CD14-positive monocyte (primary cell): ENCODE measurements at regions of chr4 and their contacts with region 1.

Region 1: GRCh38 chr4:83252782-83253405 is 31.7 kb downstream of the COQ2 start:
- DNase-seq: peak; percentile 56 to 74 (median 67)
- H3K4me3 ChIP-seq: peak overlapping the region in 1 of 3 experiments; percentile 2
- H3K4me3 Mint-ChIP-seq: no peak overlapping the region
- H3K27ac ChIP-seq: peak overlapping the region in 1 of 2 donors; percentile 72
- H3K27ac Mint-ChIP-seq: peak overlapping the region in 2 of 7 donors; percentile 78 to 79
- H3K4me1 ChIP-seq: peaks cover 42 to 46% of the 10 kb centered on the region in 2 donors
- H3K4me1 Mint-ChIP-seq: peaks cover 53% of the 10 kb centered on the region
- H3K27me3 ChIP-seq: no peaks in the 10 kb centered on the region
- H3K27me3 Mint-ChIP-seq: no peaks in the 10 kb centered on the region
- CTCF ChIP-seq: peak; percentile 78

Region 2: GRCh38 chr4:83074086-83074704 is 178.7 kb before region 1 on chr4:
- intact Hi-C with region 1: loop called in 1 of 2 experiments (anchors 10 kb)
- DNase-seq: peak; percentile 63 to 73 (median 72)
- H3K4me3 ChIP-seq: peak overlapping the region in 1 of 3 experiments; percentile 11
- H3K4me3 Mint-ChIP-seq: no peak overlapping the region
- H3K27ac ChIP-seq: no peak overlapping the region
- H3K27ac Mint-ChIP-seq: peak overlapping the region in 1 of 7 donors; percentile 51
- H3K4me1 ChIP-seq: peaks cover 4 to 13% of the 10 kb centered on the region in 2 donors
- H3K4me1 Mint-ChIP-seq: peaks cover 16% of the 10 kb centered on the region
- H3K27me3 ChIP-seq: no peaks in the 10 kb centered on the region
- H3K27me3 Mint-ChIP-seq: peaks cover 0 to 1% (median 0%) of the 10 kb centered on the region in 3 donors
- CTCF ChIP-seq: peak; percentile 78

Region 3: DNA sequence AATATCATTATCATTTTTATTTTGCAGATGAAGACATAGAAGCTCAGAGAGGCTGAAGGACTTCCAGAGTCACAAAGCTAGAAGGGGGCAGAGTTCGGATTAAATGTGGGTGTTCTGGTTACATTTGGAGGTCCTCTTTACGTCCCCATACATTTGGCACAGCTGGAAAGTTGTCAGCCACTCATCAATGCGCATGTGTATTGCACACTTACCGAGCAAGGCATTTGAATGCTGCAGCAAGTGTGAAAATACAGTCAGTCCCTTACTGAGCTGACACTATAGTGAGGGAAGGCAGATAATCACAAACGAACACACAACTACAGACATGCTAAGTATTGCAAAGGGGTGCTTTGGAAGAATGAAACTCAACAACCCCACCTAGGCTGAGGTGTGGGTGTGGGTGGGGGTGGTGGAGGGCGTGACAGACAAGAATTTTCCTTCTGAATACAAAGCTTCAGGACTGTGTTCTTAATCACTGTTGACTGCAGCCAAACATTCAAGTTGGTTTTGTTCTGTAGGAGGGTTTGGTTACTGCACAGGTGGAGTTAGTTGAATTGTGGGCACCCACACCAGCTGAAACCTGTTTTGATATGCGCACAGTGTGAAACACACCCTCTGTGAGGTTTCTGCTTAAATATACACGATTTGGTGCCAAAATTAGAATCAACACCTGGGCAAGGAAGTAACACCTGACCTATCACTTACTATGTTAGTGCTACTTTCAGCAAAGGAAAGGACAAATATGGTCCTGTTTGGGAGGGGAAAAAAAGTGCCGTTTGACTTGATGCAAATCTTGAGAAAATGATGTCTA is 40.6 kb before region 1 on chr4:
- intact Hi-C with region 1: loop called in 1 of 2 experiments (anchors 5 kb)
- DNase-seq: no peak
- H3K4me3 ChIP-seq: no peak overlapping the region
- H3K4me3 Mint-ChIP-seq: no peak overlapping the region
- H3K27ac ChIP-seq: no peak overlapping the region
- H3K27ac Mint-ChIP-seq: no peak overlapping the region
- H3K4me1 ChIP-seq: peaks cover 38 to 50% of the 10 kb centered on the region in 2 donors
- H3K4me1 Mint-ChIP-seq: peaks cover 66% of the 10 kb centered on the region
- H3K27me3 ChIP-seq: no peaks in the 10 kb centered on the region
- H3K27me3 Mint-ChIP-seq: peaks cover 0 to 3% (median 0%) of the 10 kb centered on the region in 3 donors
- CTCF ChIP-seq: no peak